ENCODE measurements at regions of chr7 and their contacts with region 1.

Region 1: DNA sequence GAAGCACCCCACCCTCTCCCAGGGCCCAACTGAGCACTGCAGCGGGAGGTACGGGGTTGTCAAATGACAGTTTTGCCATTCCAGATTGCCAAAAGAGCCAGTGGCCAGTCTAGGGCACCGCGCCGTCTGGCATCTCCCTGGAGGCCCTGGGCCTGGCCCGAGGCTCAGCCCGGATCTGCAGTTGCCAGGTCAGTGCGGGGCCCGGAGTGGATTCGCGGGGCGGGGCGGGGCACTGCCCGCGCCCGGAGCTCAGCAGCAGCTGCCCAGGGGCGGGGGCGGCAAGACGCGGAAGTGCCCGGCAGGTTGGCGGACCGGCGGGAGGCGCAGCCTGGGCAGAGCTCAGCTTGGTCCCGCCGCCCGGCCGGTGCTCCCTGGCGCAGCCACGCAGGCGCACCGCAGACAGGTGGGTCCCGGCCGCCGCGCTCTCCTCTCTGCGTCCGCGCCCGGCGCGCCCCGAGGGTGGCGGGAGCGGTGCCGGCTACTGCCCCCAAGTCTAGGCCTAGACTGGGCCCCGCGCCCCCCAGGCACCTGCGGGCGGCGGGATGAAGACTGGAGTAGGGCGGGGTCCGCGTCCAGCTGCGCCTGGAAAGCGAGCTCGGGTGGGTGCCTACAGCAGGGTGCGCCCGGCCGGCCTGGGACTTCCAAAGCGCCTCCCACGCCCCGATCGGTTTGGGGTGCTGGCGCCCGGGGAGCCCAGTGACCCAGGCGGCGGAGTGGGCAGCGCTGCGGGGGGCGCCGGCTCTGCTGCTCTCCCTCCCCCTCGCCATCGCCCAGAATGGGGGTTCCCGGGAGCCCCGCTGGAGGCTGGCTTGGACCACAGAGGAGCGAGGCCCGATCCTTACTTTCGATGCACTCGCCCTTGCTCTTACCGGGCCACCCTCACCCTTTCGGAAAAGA is at the start of gene IRF5:
- DNase-seq: peak; percentile 18
- H3K4me3 Mint-ChIP-seq: peak within 1 kb of the TSS; percentile 96
- H3K27ac Mint-ChIP-seq: peak within 1 kb of the TSS; percentile 93
- H3K4me1 Mint-ChIP-seq: peaks cover 48% of the 10 kb centered on the region
- H3K27me3 Mint-ChIP-seq: peaks cover 20% of the 10 kb centered on the region
- total RNA-seq, gene IRF5: 19.8 and 21.2 TPM in 2 replicates

Region 2: DNA sequence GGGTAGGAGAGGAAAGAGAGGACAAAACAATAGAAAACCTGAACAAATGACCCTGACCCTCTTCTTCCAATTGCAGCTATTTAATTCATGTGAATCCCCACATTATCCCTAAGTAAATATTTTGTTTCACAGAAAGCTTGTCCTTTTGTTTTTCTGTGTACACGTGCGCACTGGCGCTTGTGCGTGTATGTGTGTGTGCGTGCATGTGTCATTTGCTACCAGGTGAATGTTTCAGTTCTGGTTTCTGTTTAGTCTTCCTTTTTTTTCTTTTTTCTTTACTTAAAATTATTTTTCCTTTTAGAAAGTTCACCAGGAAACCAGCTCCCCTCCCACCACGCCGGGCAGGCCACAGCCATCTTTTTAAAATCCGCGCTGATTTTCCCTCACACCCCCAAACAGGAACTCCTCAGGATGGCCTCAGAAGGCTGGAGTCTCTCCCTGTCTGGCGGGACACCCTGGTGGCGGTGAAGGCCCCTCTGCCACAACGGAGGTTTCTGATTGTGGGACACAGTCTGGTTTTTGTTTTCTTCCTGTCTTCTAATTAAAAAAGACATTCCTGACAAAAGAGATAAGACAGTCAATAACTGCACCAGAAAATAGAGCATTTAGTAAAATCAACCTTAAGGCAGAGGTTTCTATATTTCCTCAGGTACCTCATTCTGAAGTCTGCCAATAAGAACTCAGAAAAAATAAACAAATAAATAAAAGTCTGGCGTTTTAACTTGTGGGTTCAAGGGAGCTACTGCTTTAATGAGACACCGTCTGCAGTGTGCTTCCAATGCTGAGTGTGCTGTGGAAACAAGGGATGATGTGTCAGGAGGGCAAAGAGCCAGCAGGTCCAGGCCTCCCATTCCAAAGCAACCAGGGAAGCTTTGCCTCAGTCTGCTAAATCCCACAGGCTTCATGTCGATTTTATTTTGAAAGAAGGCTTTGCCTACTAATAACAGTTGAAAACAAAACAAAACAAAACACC is 17.2 kb after region 1 on chr7:
- intact Hi-C with region 1: loop called (anchors 2 kb)
- DNase-seq: no peak
- H3K4me3 Mint-ChIP-seq: no peak overlapping the region
- H3K27ac Mint-ChIP-seq: peak overlapping the region; percentile 48
- H3K4me1 Mint-ChIP-seq: peaks cover 19% of the 10 kb centered on the region
- H3K27me3 Mint-ChIP-seq: no peaks in the 10 kb centered on the region

Region 3: GRCh38 chr7:128963327-128963757 is 25.4 kb after region 1 on chr7:
- intact Hi-C with region 1: loop called (anchors 1 kb)
- DNase-seq: peak; percentile 34
- H3K4me3 Mint-ChIP-seq: peak overlapping the region; percentile 57
- H3K27ac Mint-ChIP-seq: peak overlapping the region; percentile 72
- H3K4me1 Mint-ChIP-seq: peaks cover 43% of the 10 kb centered on the region
- H3K27me3 Mint-ChIP-seq: no peaks in the 10 kb centered on the region

Measured in activated T-helper 1 cell treated with anti-CD3 and anti-CD28 coated beads, Interleukin-12 subunit alpha, Interleukin-12 subunit beta, Interleukin-2, Interleukin-4 antibody, amounts not matched to agents 30 ng/mL and 10 ng/mL and 1 ng/mL, durations not matched to agents 14 hours and 24 hours and 36 hours (primary cell).